Activated naive CD4-positive, alpha-beta T cell treated with anti-CD3 and anti-CD28 coated beads, Interleukin-2, amount 10 ng/mL, durations not matched to agents 7 days and 5 days (primary cell): ENCODE measurements at regions of chr5 and their contacts with region 1.

Region 1: GRCh38 chr5:62460578-62460983 is 48.0 kb downstream of the IPO11 start:
- DNase-seq: no peak
- H3K4me3 Mint-ChIP-seq: no peak overlapping the region
- H3K27ac Mint-ChIP-seq: no peak overlapping the region
- H3K4me1 Mint-ChIP-seq: no peaks in the 10 kb centered on the region
- H3K27me3 Mint-ChIP-seq: no peaks in the 10 kb centered on the region

Region 2: GRCh38 chr5:62489471-62489870 is 28.9 kb after region 1 on chr5:
- CTCF ChIA-PET with region 1: no interaction called
- DNase-seq: no peak
- H3K4me3 Mint-ChIP-seq: no peak overlapping the region
- H3K27ac Mint-ChIP-seq: no peak overlapping the region
- H3K4me1 Mint-ChIP-seq: peaks cover 2% of the 10 kb centered on the region
- H3K27me3 Mint-ChIP-seq: no peaks in the 10 kb centered on the region

Region 3: GRCh38 chr5:62779010-62779422 is 318.4 kb after region 1 on chr5:
- CTCF ChIA-PET with region 1: interaction called, 15 read pairs
- DNase-seq: no peak
- H3K4me3 Mint-ChIP-seq: no peak overlapping the region
- H3K27ac Mint-ChIP-seq: no peak overlapping the region
- H3K4me1 Mint-ChIP-seq: peaks cover 6% of the 10 kb centered on the region
- H3K27me3 Mint-ChIP-seq: no peaks in the 10 kb centered on the region